MCF 10A (cell line): ENCODE measurements at regions of chr20 and their contacts with region 1.

Region 1: GRCh38 chr20:54680872-54681619 is 205.7 kb downstream of the DOK5 start:
- DNase-seq: peak; percentile 52
- H3K4me3 Mint-ChIP-seq: no peak overlapping the region
- H3K27ac Mint-ChIP-seq: no peak overlapping the region
- H3K4me1 Mint-ChIP-seq: peaks cover 6% of the 10 kb centered on the region
- H3K27me3 Mint-ChIP-seq: peaks cover 63% of the 10 kb centered on the region
- CTCF ChIP-seq: peak; percentile 71

Region 2: DNA sequence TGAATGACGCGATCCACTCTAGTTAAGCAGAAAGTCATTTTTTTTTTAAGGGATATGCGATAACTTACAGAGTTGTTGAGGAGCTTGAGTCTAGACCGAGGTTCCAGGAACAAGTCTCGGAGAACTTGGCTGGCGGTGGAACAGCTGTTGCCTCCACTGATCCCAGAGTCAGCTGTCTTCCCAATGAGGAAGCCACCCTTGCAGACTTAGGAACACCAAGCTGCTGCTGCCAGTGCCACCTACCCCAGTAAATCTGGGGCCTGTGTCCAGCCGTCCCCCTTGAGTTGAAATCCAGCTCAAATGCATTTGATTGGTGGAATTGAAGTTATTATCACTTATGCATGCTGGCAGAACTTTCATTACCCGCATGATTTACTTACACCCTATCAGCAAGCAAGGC is 466.5 kb before region 1 on chr20:
- CTCF ChIA-PET with region 1: interaction called, 16 read pairs
- POLR2A ChIA-PET with region 1: no interaction called
- intact Hi-C with region 1: no loop called
- DNase-seq: no peak
- H3K4me3 Mint-ChIP-seq: no peak overlapping the region
- H3K27ac Mint-ChIP-seq: no peak overlapping the region
- H3K4me1 Mint-ChIP-seq: peaks cover 6% of the 10 kb centered on the region
- H3K27me3 Mint-ChIP-seq: no peaks in the 10 kb centered on the region
- CTCF ChIP-seq: no peak

Region 3: DNA sequence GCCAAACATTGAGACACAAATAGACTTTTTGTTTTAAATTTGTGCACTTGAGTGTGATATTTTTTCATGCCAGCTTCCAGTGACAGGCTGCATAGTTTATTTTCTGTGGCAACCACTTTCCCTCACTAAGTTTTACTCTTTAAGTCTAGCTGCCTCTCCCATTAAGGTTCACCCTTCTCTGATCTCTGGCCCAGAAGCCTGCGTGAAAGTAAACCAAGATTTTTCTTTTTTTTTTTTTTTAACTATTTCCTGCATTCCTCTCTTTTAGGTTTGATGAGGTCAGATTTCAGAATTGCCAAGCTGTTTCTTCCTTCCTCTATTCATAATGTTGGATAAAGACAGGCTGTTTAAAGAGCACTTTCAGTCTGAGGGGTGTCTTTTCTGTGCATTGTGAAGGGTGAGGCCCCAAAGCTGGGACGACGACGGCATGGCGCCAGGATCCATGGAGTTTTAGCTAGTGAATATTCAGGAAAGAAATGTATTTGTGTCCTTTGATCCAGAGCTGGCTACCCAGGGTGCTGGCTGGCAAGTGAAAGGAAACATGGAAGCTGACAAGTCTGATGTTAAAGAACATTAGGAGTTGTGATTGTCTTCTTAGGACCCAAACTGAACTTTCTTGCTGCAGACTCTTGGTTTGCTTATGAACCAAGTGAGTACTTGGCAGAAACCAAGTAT is 155.0 kb before region 1 on chr20:
- CTCF ChIA-PET with region 1: no interaction called
- POLR2A ChIA-PET with region 1: no interaction called
- intact Hi-C with region 1: no loop called
- DNase-seq: no peak
- H3K4me3 Mint-ChIP-seq: no peak overlapping the region
- H3K27ac Mint-ChIP-seq: no peak overlapping the region
- H3K4me1 Mint-ChIP-seq: no peaks in the 10 kb centered on the region
- H3K27me3 Mint-ChIP-seq: peaks cover 81% of the 10 kb centered on the region
- CTCF ChIP-seq: no peak

Region 4: GRCh38 chr20:54668271-54669039 is 12.6 kb before region 1 on chr20:
- CTCF ChIA-PET with region 1: interaction called, 109 read pairs
- POLR2A ChIA-PET with region 1: no interaction called
- intact Hi-C with region 1: no loop called
- DNase-seq: peak; percentile 32
- H3K4me3 Mint-ChIP-seq: no peak overlapping the region
- H3K27ac Mint-ChIP-seq: no peak overlapping the region
- H3K4me1 Mint-ChIP-seq: no peaks in the 10 kb centered on the region
- H3K27me3 Mint-ChIP-seq: peaks cover 70% of the 10 kb centered on the region
- CTCF ChIP-seq: peak; percentile 54

Region 5: DNA sequence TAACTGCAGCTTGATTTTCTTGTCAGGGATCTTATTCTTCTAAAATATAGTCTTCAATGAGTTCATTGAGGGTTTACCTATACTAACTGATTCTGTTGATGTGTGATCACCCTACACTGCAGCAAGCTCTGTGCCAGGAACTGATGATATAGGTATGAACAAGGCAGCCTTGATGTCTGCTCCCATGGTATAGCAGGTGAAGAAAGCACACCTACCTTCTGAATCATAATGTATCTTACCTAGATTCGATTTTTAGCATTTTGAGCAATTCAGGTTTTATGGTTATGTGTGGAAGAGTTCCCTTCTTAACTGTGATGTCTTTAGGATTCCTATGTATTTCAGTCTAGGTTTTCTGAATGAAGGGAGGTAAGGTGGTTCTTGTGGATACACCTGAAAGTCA is 17.3 kb after region 1 on chr20:
- CTCF ChIA-PET with region 1: interaction called, 53 read pairs
- POLR2A ChIA-PET with region 1: no interaction called
- intact Hi-C with region 1: no loop called
- DNase-seq: no peak
- H3K4me3 Mint-ChIP-seq: no peak overlapping the region
- H3K27ac Mint-ChIP-seq: no peak overlapping the region
- H3K4me1 Mint-ChIP-seq: no peaks in the 10 kb centered on the region
- H3K27me3 Mint-ChIP-seq: peaks cover 44% of the 10 kb centered on the region
- CTCF ChIP-seq: no peak

Region 6: DNA sequence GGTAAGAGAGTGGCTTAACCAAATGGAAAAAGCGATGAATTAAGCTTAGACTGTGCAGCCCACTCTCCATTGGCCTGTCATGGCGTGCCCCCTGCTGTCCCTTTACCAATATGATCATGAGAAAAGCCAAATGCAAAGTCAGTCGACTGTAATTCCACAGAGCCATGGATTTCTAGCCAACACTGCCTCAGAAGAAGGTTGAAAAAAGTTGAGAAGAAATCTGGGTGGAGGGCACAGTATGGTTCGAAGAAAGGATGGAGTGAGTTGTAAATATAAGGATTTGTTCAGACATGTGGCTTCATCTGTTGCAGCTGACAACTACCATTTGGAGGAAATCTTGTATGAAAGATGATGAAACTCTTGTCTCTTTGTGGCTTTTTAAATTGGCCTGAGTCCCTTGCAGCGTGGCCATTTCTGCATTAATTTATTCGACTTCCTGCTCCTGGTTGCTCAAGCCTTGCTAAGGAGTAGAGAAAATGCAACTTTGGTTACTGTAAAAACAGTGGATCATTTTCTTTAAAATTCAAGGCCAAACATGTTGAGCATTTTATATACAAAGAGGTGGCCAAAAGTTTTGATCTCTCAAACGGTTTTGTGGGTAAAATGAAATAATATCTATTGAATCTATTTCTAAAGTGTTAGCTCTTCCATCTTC is 45.8 kb after region 1 on chr20:
- CTCF ChIA-PET with region 1: interaction called, 18 read pairs
- POLR2A ChIA-PET with region 1: interaction called, 3 read pairs
- intact Hi-C with region 1: no loop called
- DNase-seq: no peak
- H3K4me3 Mint-ChIP-seq: no peak overlapping the region
- H3K27ac Mint-ChIP-seq: no peak overlapping the region
- H3K4me1 Mint-ChIP-seq: no peaks in the 10 kb centered on the region
- H3K27me3 Mint-ChIP-seq: no peaks in the 10 kb centered on the region
- CTCF ChIP-seq: no peak

Region 7: DNA sequence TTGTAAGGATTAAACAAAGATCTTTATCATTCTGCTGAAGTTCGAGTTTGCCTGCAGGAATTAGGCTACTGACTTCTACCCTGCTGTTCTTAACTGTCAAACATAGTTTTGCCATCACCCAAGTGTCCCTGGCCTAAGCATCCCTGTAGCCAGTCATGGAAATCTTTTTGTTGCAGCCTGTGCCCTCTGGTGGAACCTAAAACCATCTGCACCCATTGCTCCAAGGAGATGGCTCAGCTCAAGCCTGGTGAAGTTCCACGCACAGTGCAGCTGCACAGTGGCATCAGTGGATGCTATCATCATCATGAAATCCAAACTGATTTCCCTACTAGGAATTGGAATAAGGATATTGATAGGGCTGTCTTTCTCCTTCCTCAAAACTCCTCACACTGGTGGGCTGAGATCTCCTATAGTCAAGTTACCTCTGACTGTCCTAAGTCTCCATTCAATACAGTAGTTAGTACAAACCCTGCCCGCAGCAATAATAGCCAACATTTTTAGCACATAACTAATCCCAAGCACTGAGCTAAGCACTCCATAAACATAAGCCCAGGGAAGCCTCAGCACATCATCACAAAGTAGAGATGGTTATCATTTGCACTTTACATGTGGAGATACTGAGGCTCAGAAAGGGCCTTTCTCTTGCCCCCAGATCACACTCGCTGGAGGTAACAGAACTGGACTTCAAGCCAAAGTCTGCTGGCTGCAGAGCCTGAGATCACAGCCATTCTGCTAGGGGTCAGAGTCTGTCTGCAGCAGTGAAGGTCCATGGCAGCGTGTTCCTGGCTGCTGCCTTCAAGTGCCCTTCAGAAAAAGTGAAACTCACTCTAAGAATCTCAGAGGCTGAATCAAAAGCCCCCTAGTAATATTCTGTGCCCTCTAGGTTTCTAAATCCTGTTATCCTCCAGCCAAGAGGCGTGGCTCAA is 1490.3 kb after region 1 on chr20:
- CTCF ChIA-PET with region 1: interaction called, 34 read pairs
- POLR2A ChIA-PET with region 1: no interaction called
- intact Hi-C with region 1: loop called (anchors 2 kb)
- DNase-seq: peak; percentile 32
- H3K4me3 Mint-ChIP-seq: no peak overlapping the region
- H3K27ac Mint-ChIP-seq: no peak overlapping the region
- H3K4me1 Mint-ChIP-seq: no peaks in the 10 kb centered on the region
- H3K27me3 Mint-ChIP-seq: peaks cover 27% of the 10 kb centered on the region
- CTCF ChIP-seq: peak; percentile 42